ENCODE measurements at regions of chr6 and their contacts with region 1.

Region 1: DNA sequence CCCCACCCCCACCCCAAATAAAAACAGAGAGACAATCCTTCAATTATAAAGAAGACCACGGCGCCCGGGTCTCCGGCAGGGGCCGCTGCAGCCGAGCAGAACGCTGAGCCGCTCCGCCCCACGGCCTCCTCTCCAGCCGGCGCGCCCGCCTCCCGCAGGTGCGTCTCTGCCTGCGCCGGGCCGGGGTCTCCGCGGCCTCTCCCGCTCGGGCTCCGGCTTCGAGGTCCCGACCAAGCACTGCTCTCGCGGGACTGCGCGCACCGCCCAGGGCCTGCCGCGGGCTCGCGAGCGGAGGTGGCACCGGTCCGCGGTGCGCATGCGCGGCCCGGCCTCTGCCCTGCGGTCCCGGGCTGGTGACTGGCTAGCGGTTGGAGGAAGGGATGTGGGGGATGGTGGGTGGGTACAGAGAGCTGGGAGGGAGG is 241 bp upstream of the SIRT5 start:
- DNase-seq: peak; percentile 96
- ATAC-seq: peak; percentile 96

Region 2: GRCh38 chr6:13328076-13328874 is 245.9 kb before region 1 on chr6 and contains the start of gene TBC1D7:
- intact Hi-C with region 1: loop called (anchors 5 kb)
- DNase-seq: peak; percentile 94
- ATAC-seq: peak; percentile 96
- total RNA-seq, gene TBC1D7: 32.2 TPM

Region 3: GRCh38 chr6:13413900-13414555 is 160.1 kb before region 1 on chr6:
- intact Hi-C with region 1: loop called (anchors 5 kb)
- DNase-seq: peak; percentile 77
- ATAC-seq: peak; percentile 68

Region 4: GRCh38 chr6:13538084-13538483 is 36.1 kb before region 1 on chr6:
- intact Hi-C with region 1: loop called (anchors 2 kb)
- DNase-seq: no peak
- ATAC-seq: peak; percentile 73

Region 5: DNA sequence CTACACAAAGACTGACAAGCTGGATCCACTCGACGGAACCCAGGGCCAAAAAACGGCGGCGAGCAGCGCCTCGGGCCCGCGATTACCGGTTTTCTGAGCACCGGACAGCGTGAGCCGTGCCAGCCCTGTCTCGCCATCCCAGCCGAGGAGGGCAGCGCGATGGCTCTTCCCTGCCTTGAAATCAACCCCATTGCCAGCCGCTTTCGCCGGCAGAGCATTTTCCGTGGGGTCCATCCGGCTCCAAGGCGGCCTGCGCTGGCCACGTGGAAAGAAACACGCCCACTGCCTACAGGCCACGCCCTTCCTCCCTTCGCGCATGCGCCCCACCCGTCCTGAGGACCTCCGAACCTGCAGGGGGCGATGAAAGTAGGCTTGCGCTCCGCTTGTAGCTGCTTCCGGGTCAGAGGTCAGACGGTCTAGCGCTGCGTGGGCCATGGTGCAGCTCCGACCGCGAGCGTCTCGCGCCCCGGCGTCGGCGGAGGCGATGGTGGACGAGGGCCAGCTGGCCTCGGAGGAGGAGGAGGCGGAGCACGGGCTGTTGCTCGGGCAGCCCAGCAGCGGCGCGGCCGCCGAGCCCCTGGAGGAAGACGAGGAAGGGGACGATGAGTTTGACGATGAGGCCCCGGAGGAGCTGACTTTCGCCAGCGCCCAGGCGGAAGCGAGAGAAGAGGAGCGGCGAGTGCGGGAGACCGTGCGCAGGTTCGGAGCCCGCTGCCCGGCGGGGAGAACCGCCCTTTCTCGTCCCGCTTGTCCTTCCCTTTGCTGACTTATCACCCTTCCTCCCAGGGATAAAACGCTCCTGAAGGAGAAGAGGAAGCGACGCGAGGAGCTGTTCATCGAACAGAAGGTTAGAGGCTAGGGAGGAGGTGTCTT is 41.0 kb after region 1 on chr6 and contains the start of gene NOL7:
- intact Hi-C with region 1: loop called (anchors 5 kb)
- DNase-seq: peak; percentile 96
- ATAC-seq: peak; percentile 99
- total RNA-seq, gene NOL7: 50.7 TPM

Region 6: DNA sequence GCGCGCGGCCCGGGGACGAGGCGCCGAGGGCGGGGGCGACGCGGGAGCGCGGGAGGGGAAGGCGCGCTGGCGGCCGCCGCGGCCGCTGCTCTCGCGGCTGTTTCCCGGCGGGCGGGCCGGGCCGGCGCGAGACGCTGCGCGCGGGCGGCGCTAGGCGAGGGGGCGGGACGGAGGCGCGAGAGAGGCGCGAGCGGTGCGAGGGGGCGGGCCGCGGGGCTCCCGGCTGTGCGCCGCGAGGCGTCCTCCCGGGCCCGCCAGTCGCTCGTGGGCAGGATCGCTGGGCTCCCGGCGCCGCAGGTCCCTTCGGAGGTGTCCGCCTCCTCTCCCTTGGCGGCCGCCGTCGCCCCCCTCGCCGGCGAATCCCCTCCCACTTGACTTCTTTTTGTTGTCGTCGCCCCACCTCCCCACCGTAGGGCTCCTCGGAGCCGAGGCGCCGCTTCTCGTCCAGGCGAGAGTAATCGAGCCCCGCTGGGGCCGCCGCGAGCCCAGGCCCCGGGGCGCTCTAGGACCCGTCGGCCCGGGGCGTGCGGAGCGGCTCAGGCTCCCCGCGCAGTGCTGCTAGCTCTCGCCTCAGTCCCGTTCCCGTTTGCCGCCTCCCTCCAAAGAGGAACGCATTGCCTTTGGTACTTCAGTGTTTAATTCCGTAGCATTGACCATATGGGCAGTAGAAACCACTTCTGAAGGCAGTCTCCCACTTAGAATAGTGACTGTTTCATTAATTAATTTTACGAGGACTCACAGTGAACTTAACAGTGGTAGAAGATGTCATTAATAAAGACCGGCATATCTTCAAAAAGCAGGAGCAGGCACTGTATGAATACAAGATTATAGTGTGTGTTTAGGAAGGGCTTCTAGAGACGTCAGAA is 137.8 kb after region 1 on chr6 and contains the start of gene RANBP9:
- intact Hi-C with region 1: loop called (anchors 5 kb)
- DNase-seq: peak; percentile 94
- ATAC-seq: peak; percentile 96
- total RNA-seq, gene RANBP9: 32.3 TPM

Region 7: DNA sequence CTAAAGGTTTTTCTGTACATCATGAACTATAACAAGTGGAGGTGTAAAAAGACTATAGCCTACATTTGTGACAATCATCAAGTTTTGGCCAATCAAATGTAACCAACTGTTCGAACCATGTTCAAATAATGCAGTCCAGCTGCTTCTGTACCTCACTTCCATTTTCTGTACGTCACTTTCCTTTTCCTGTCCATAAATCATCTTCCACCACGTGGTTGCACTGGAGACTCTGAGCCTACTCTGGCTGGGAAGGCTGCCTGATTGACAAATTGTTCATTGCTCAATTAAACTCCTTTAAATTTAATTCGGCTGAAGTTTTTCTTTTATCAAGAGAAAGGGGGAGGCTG is 1401.3 kb after region 1 on chr6:
- intact Hi-C with region 1: no loop called
- DNase-seq: no peak
- ATAC-seq: no peak

Measured in Right ventricle myocardium inferior (tissue), 1 donor.